ENCODE measurements at regions of chr4 and their contacts with region 1.

Region 1: GRCh38 chr4:172153719-172154118 is 340.5 kb downstream of the GALNTL6 start:
- DNase-seq: no peak
- H3K4me3 Mint-ChIP-seq: no peak overlapping the region
- H3K27ac Mint-ChIP-seq: no peak overlapping the region
- H3K4me1 Mint-ChIP-seq: no peaks in the 10 kb centered on the region
- H3K27me3 Mint-ChIP-seq: no peaks in the 10 kb centered on the region

Region 2: GRCh38 chr4:172142281-172142738 is 11.4 kb before region 1 on chr4:
- CTCF ChIA-PET with region 1: no interaction called
- POLR2A ChIA-PET with region 1: no interaction called
- DNase-seq: no peak
- H3K4me3 Mint-ChIP-seq: no peak overlapping the region
- H3K27ac Mint-ChIP-seq: no peak overlapping the region
- H3K4me1 Mint-ChIP-seq: no peaks in the 10 kb centered on the region
- H3K27me3 Mint-ChIP-seq: no peaks in the 10 kb centered on the region

Region 3: DNA sequence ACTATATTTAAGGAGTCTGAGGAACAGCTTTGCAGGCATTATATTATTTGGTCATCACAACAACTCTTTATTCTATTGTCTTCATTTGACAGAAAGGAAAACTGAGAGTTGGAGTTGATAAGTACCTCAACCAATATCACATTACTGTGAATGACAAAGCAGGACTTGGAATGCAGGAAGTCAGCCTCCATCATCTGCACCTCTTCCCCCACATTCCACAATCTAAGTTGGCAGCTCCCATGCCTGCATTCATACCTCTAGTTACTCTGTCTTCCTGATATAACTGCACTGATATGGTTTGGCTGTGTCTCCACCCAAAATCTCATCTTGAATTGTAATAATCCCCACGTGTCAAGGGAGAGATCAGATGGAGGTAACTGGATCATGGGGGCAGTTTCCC is 16.2 kb after region 1 on chr4:
- CTCF ChIA-PET with region 1: no interaction called
- POLR2A ChIA-PET with region 1: no interaction called
- DNase-seq: no peak
- H3K4me3 Mint-ChIP-seq: no peak overlapping the region
- H3K27ac Mint-ChIP-seq: no peak overlapping the region
- H3K4me1 Mint-ChIP-seq: no peaks in the 10 kb centered on the region
- H3K27me3 Mint-ChIP-seq: no peaks in the 10 kb centered on the region

Region 4: DNA sequence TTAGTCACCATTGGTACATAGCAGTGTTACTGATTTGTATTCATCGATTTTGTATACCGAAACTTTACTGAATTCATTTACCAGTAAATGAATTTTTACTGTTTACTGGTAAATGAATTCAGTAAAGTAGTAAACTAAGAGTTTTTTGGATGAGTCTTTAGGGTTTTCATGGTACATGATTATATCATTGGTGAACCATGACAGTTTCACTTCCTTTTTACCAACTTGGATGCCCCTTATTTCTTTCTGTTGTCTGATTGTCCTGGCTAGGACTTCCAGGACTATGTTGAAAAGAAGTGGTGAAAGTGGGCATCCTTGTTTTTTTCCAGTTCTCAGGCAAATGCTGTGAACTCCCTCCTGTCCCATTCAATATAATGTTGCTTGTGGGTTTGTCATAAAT is 154.4 kb after region 1 on chr4:
- CTCF ChIA-PET with region 1: no interaction called
- POLR2A ChIA-PET with region 1: interaction called, 10 read pairs
- DNase-seq: no peak
- H3K4me3 Mint-ChIP-seq: no peak overlapping the region
- H3K27ac Mint-ChIP-seq: no peak overlapping the region
- H3K4me1 Mint-ChIP-seq: no peaks in the 10 kb centered on the region
- H3K27me3 Mint-ChIP-seq: no peaks in the 10 kb centered on the region

Measured in activated CD4-positive, alpha-beta T cell treated with anti-CD3 and anti-CD28 coated beads, Interleukin-2, amount 10 ng/mL, durations not matched to agents 7 days and 5 days (primary cell).